Ascending aorta (tissue), 2 donors: ENCODE measurements at regions of chr9 and their contacts with region 1.

Region 1: GRCh38 chr9:35690431-35691333 is 957 bp upstream of the TPM2 start:
- DNase-seq: peak; percentile 56 to 94
- H3K4me3 ChIP-seq: peak overlapping the region; percentile 83 to 93
- H3K27ac ChIP-seq: peak overlapping the region; percentile 93 to 97
- H3K4me1 ChIP-seq: peaks cover 0 to 27% of the 10 kb centered on the region in 2 donors
- H3K27me3 ChIP-seq: no peaks in the 10 kb centered on the region
- CTCF ChIP-seq: no peak

Region 2: DNA sequence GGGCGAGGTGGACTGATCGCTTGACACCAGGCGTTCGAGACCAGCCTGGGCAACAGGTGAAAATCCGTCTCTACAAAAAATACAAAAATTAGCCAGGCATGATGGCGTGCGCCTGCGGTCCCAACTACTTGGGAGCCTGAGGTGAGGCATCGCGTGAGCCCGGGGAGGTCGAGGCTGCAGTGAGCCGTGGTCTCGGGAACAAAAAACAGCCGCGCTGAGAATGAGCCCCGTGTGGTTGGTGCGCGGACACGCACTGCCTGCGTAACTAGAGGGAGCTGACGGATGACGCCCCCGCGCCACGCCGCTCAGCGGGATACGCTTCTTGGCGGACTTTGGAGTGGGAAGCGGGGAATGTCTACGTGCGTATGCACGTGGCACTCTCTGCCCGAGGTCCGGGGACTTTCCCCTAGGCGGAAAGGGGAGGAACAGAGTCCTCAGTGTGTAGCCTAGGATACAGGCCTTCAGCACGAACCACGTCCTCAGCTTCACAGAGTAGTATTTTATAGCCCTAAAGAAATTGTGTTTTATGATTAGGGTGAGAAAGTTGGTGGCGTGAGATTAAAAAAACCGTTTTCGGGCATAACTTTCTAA is 33.0 kb before region 1 on chr9 and contains the start of gene RMRP:
- intact Hi-C with region 1: loop called (anchors 1 kb)
- DNase-seq: peak; percentile 90 to 99
- H3K4me3 ChIP-seq: peak within 1 kb of the TSS; percentile 88 to 99
- H3K27ac ChIP-seq: peak within 1 kb of the TSS; percentile 97 to 100
- H3K4me1 ChIP-seq: peaks cover 5 to 35% of the 10 kb centered on the region in 2 donors
- H3K27me3 ChIP-seq: no peaks in the 10 kb centered on the region
- CTCF ChIP-seq: peak; percentile 32 to 56 (median 34)
- total RNA-seq, gene RMRP: 17,070 TPM

Region 3: DNA sequence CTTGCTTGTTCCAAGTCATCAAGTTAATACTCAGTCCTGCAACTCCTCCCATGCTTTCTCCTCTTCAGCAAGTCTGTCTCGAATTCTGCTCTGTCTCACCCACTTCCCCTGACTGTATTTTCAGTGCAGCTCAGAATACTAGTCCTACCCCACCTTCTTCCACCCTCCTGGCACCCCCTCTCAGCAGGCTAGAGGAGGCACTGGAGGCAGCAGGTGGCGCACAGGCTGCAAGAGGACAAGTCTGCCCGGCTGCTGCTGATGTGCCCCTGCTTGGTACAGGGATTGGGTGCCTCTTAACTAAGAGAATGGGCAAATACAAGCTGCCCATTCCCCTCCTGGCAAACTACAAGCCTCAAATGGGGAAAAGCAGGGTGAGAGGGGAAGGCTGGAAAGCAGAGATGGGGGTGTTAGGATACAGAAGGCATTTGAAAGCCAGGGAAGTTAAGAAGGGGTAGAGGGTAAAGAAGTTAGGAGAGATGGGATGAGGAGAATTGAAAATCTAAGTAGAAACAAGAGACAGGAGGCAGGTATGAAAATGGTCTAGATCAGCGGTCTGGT is 36.3 kb after region 1 on chr9:
- intact Hi-C with region 1: loop called (anchors 1 kb)
- DNase-seq: peak; percentile 60 to 90
- H3K4me3 ChIP-seq: peak overlapping the region; percentile 74 to 81
- H3K27ac ChIP-seq: peak overlapping the region; percentile 98 to 99
- H3K4me1 ChIP-seq: peaks cover 11 to 20% of the 10 kb centered on the region in 2 donors
- H3K27me3 ChIP-seq: no peaks in the 10 kb centered on the region
- CTCF ChIP-seq: peak in 2 of 3 experiments; percentile 31 to 50